ENCODE measurements at regions of chr2 and their contacts with region 1.

Region 1: GRCh38 chr2:121530212-121530705 is 421 bp upstream of the RNU4ATAC start:
- DNase-seq: peak; percentile 72 to 91 (median 82)
- ATAC-seq: peak; percentile 82 to 89 (median 84)
- H3K4me3 ChIP-seq: peak overlapping the region; percentile 53 to 86 (median 76)
- H3K27ac ChIP-seq: peak overlapping the region; percentile 98 to 99 (median 98)
- H3K4me1 ChIP-seq: peaks cover 6 to 37% (median 17%) of the 10 kb centered on the region in 3 donors
- H3K27me3 ChIP-seq: no peaks in the 10 kb centered on the region
- CTCF ChIP-seq: no peak

Region 2: DNA sequence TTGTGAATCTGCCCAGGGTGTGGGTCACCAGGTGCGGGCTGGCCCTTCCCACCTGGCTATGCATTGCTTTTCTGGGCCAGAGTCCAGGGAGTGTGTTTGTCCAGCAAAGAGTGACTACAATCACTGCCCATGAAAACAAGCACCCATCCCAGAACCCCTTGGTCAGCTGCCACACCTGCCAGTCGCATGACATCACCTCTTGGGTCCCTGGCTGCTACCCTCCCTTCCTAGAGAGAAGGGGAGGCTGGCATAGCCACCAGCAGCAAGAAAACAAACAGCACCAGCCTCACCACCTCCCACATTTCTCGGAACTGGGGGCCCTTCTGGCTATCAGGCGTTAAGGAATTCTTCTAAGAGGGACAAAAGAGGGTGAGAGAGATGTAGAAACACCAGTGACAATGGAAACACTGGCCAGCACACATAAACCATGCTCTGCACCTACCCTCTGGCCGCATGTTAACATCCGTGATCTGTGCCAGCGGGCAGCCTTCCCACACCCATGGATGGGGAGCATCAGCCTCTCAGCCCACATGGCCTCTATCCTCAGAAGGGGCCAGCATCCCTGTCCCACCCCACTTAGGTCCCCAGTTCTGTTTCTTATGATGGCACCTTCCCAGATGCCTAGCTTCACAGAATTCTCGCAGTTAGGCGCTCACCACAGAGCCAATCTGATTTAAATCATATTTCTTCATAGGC is 904.2 kb before region 1 on chr2:
- intact Hi-C with region 1: no loop called
- DNase-seq: peak; percentile 66 to 89 (median 85)
- ATAC-seq: peak; percentile 90 to 95 (median 94)
- H3K4me3 ChIP-seq: no peak overlapping the region
- H3K27ac ChIP-seq: peak overlapping the region in 3 of 4 donors; percentile 10 to 68 (median 34)
- H3K4me1 ChIP-seq: no peaks in the 10 kb centered on the region
- H3K27me3 ChIP-seq: no peaks in the 10 kb centered on the region
- CTCF ChIP-seq: no peak

Region 3: GRCh38 chr2:120958623-120959366 is 571.5 kb before region 1 on chr2:
- intact Hi-C with region 1: no loop called
- DNase-seq: peak in 1 of 6 donors; percentile 53
- ATAC-seq: no peak
- H3K4me3 ChIP-seq: no peak overlapping the region
- H3K27ac ChIP-seq: no peak overlapping the region
- H3K4me1 ChIP-seq: no peaks in the 10 kb centered on the region
- H3K27me3 ChIP-seq: no peaks in the 10 kb centered on the region
- CTCF ChIP-seq: no peak

Region 4: GRCh38 chr2:121710470-121711170 is 180.4 kb after region 1 on chr2:
- intact Hi-C with region 1: loop called in 1 of 3 experiments (anchors 10 kb)
- DNase-seq: no peak
- ATAC-seq: peak in 2 of 4 donors; percentile 36 to 37
- H3K4me3 ChIP-seq: no peak overlapping the region
- H3K27ac ChIP-seq: peak overlapping the region in 3 of 4 donors; percentile 18 to 79 (median 57)
- H3K4me1 ChIP-seq: peaks cover 0 to 4% (median 3%) of the 10 kb centered on the region in 3 donors
- H3K27me3 ChIP-seq: no peaks in the 10 kb centered on the region
- CTCF ChIP-seq: no peak